Activated CD4-positive, alpha-beta memory T cell treated with anti-CD3 and anti-CD28 coated beads, Interleukin-2, amount 10 ng/mL, durations not matched to agents 7 days and 5 days (primary cell): ENCODE measurements at regions of chr10 and their contacts with region 1.

Region 1: DNA sequence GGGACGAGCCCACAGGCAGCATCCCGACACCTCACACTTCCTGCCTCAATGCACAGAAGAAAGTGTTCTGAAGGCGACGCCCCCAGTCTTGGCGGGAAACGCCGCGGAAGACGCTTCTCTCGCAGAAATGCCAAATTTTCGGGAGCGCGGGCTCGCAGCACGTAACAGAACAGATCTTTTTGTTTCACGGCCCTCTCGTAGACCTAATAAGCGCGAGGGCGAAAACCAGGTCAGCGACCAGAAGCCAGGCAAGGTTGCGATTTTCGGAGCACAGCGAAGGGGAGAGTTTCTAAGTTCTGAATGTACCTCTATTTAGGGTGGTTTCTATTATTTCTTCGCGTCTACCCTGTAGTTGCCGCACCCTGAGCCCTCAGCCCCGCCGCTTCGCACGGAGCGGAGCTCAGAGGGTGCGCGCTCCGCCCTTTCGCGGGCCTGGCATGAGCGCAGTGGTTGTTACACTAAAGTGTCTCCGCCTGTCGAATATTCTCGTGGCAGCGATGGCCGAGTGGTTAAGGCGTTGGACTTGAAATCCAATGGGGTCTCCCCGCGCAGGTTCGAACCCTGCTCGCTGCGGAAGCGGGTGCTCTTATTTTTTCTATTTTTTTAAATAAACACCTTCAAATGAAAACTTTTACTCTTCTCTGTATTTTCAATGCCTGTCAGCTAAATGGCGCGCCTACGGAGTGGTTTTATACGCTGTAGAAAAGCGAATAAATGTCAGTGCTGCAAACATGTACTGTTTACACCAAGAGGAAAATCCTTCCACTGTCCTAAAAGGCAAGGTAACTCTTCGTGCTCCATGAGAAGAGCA is 68.2 kb upstream of the CTNNA3 start:
- DNase-seq: peak; percentile 97
- H3K4me3 Mint-ChIP-seq: peak overlapping the region; percentile 72
- H3K27ac Mint-ChIP-seq: peak overlapping the region; percentile 88
- H3K4me1 Mint-ChIP-seq: peaks cover 21% of the 10 kb centered on the region
- H3K27me3 Mint-ChIP-seq: peaks cover 2% of the 10 kb centered on the region

Region 2: GRCh38 chr10:67587771-67588170 is 176.4 kb before region 1 on chr10:
- CTCF ChIA-PET with region 1: no interaction called
- POLR2A ChIA-PET with region 1: no interaction called
- DNase-seq: no peak
- H3K4me3 Mint-ChIP-seq: no peak overlapping the region
- H3K27ac Mint-ChIP-seq: no peak overlapping the region
- H3K4me1 Mint-ChIP-seq: no peaks in the 10 kb centered on the region
- H3K27me3 Mint-ChIP-seq: peaks cover 6% of the 10 kb centered on the region

Region 3: GRCh38 chr10:67612577-67613537 is 151.4 kb before region 1 on chr10:
- CTCF ChIA-PET with region 1: no interaction called
- POLR2A ChIA-PET with region 1: interaction called, 15 read pairs
- DNase-seq: peak; percentile 84
- H3K4me3 Mint-ChIP-seq: peak overlapping the region; percentile 43
- H3K27ac Mint-ChIP-seq: peak overlapping the region; percentile 84
- H3K4me1 Mint-ChIP-seq: peaks cover 26% of the 10 kb centered on the region
- H3K27me3 Mint-ChIP-seq: peaks cover 28% of the 10 kb centered on the region

Region 4: GRCh38 chr10:67735430-67735829 is 28.8 kb before region 1 on chr10:
- CTCF ChIA-PET with region 1: no interaction called
- POLR2A ChIA-PET with region 1: no interaction called
- DNase-seq: no peak
- H3K4me3 Mint-ChIP-seq: no peak overlapping the region
- H3K27ac Mint-ChIP-seq: no peak overlapping the region
- H3K4me1 Mint-ChIP-seq: peaks cover 2% of the 10 kb centered on the region
- H3K27me3 Mint-ChIP-seq: peaks cover under 1% of the 10 kb centered on the region

Region 5: GRCh38 chr10:67779465-67780203 is 15.4 kb after region 1 on chr10:
- CTCF ChIA-PET with region 1: interaction called, 23 read pairs
- POLR2A ChIA-PET with region 1: interaction called, 9 read pairs
- DNase-seq: peak; percentile 73
- H3K4me3 Mint-ChIP-seq: no peak overlapping the region
- H3K27ac Mint-ChIP-seq: no peak overlapping the region
- H3K4me1 Mint-ChIP-seq: peaks cover 35% of the 10 kb centered on the region
- H3K27me3 Mint-ChIP-seq: no peaks in the 10 kb centered on the region

Region 6: GRCh38 chr10:67818320-67818719 is 54.1 kb after region 1 on chr10:
- CTCF ChIA-PET with region 1: no interaction called
- POLR2A ChIA-PET with region 1: no interaction called
- DNase-seq: no peak
- H3K4me3 Mint-ChIP-seq: no peak overlapping the region
- H3K27ac Mint-ChIP-seq: no peak overlapping the region
- H3K4me1 Mint-ChIP-seq: peaks cover 32% of the 10 kb centered on the region
- H3K27me3 Mint-ChIP-seq: no peaks in the 10 kb centered on the region